HCT116 (cell line): ENCODE measurements at regions of chr2 and their contacts with region 1.

Region 1: GRCh38 chr2:41782306-41783158 is 265.3 kb upstream of the PKDCC start:
- DNase-seq: peak; percentile 24
- ATAC-seq: peak; percentile 72
- H3K4me3 ChIP-seq: no peak overlapping the region
- H3K27ac ChIP-seq: no peak overlapping the region
- H3K4me1 ChIP-seq: no peaks in the 10 kb centered on the region
- H3K27me3 ChIP-seq: peaks cover 9% of the 10 kb centered on the region; the same call in 1 of the 2 replicates
- CTCF ChIP-seq: peak; percentile 57 to 87 (median 68); a peak in 5 of 6 replicates
- POLR2A ChIP-seq: no peak
- RAD21 ChIP-seq: peak; percentile 82

Region 2: DNA sequence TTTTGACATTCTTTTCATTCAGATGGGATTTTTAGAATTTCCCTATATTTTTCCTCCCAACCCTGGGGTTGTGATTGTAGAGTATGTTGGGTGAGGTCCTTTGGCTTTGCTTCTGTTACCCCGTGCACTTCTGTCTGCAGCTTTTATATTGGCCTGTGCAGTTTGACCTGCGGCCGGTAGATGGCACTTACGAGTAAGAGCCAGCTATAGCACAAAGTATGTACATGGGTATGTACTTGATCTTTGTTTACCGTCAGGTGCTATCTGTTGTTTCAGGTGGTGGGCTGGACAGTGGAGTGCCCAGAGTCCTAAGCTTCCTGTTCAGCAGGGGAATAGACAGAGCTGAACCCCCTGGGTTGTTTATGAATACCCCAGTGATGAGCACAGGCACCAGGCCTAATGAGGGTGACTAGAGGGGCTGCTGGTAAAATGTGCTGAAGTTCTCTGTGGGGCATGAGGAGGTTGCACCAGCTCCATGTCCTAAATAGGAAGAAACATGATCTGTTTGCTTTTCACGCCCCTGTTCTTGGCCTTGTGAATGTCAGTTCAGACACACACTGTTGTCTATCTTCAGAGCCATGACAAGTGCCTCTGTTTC is 1944.6 kb before region 1 on chr2:
- CTCF ChIA-PET with region 1: no interaction called
- POLR2A ChIA-PET with region 1: no interaction called
- RAD21 ChIA-PET with region 1: no interaction called
- intact Hi-C with region 1: loop called (anchors 10 kb)
- DNase-seq: peak; percentile 21
- ATAC-seq: peak; percentile 98
- H3K4me3 ChIP-seq: no peak overlapping the region
- H3K27ac ChIP-seq: no peak overlapping the region
- H3K4me1 ChIP-seq: no peaks in the 10 kb centered on the region
- H3K27me3 ChIP-seq: no peaks in the 10 kb centered on the region
- CTCF ChIP-seq: peak; percentile 38 to 97 (median 95); a peak in 5 of 6 replicates
- POLR2A ChIP-seq: no peak
- RAD21 ChIP-seq: peak; percentile 68

Region 3: DNA sequence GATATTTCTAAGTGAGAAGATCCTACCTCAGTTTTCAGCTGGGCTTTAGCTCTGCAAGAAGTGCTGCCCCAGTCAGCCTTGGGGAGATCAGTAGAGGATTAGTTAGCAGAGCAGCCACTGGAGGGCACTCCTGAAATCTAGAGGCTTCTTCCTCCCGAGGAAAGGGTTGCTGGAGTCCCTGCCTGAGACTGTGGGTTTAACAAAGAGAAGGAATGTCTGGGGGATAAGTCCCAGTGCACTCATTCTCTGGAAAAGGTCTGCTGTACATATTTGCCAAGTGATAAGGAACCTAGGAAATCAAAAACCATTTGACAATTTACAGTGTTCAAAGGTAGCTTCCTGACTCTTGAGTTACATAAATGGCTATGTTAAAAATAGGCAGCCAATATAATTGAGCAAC is 1537.9 kb before region 1 on chr2:
- CTCF ChIA-PET with region 1: no interaction called
- POLR2A ChIA-PET with region 1: no interaction called
- RAD21 ChIA-PET with region 1: no interaction called
- intact Hi-C with region 1: loop called (anchors 2 kb)
- DNase-seq: peak; percentile 33
- ATAC-seq: peak; percentile 98
- H3K4me3 ChIP-seq: no peak overlapping the region
- H3K27ac ChIP-seq: no peak overlapping the region
- H3K4me1 ChIP-seq: no peaks in the 10 kb centered on the region
- H3K27me3 ChIP-seq: 0 out of 2 replicates have a peak, but pooled peaks cover 5% of the 10 kb centered on the region
- CTCF ChIP-seq: peak; percentile 42 to 60 (median 59); a peak in 5 of 6 replicates
- POLR2A ChIP-seq: no peak
- RAD21 ChIP-seq: peak; percentile 57

Region 4: DNA sequence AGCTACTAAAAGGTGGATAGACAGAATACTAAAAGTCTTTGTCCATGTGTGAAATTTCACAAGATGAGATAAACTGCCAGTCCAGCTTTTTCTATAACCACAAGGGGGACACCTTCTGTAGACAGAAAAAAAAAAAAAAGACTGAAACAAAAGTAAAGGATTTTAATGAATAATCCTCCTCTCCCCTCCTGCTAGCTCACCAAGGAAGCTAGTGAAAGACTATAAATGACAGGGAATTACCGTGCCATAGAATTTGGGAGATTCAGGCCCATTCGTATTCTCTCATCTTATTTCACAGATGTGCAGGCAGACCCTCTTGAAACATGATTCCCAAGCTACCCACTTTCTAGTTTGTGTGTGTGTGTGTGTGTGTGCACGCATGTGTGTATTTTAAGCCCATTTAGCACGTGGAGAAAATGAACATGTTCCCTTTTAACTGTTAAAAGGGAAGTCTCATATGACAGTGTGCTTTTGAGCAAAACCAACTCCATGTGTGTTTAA is 1294.4 kb before region 1 on chr2:
- CTCF ChIA-PET with region 1: no interaction called
- POLR2A ChIA-PET with region 1: no interaction called
- RAD21 ChIA-PET with region 1: no interaction called
- intact Hi-C with region 1: loop called (anchors 2 kb)
- DNase-seq: peak; percentile 2
- ATAC-seq: no peak
- H3K4me3 ChIP-seq: no peak overlapping the region
- H3K27ac ChIP-seq: no peak overlapping the region
- H3K4me1 ChIP-seq: no peaks in the 10 kb centered on the region
- H3K27me3 ChIP-seq: peaks cover 3% of the 10 kb centered on the region; the same call in 1 of the 2 replicates
- CTCF ChIP-seq: peak; percentile 8 to 58 (median 46); a peak in 4 of 6 replicates
- POLR2A ChIP-seq: no peak
- RAD21 ChIP-seq: 0 out of 2 replicates have a peak, but pooled peaks have one; percentile 18

Region 5: GRCh38 chr2:41414486-41415230 is 367.9 kb before region 1 on chr2:
- CTCF ChIA-PET with region 1: interaction called, 3 read pairs
- POLR2A ChIA-PET with region 1: no interaction called
- RAD21 ChIA-PET with region 1: no interaction called
- intact Hi-C with region 1: loop called (anchors 1 kb)
- DNase-seq: no peak
- ATAC-seq: peak; percentile 47; the same call in 1 of the 2 replicates
- H3K4me3 ChIP-seq: no peak overlapping the region
- H3K27ac ChIP-seq: no peak overlapping the region
- H3K4me1 ChIP-seq: no peaks in the 10 kb centered on the region
- H3K27me3 ChIP-seq: no peaks in the 10 kb centered on the region
- CTCF ChIP-seq: peak; percentile 20 to 57 (median 49); a peak in 4 of 6 replicates
- POLR2A ChIP-seq: no peak
- RAD21 ChIP-seq: peak; percentile 33; the same call in 1 of the 2 replicates